OCI-LY7 (cell line): ENCODE measurements at regions of chr13 and their contacts with region 1.

Region 1: GRCh38 chr13:28636674-28637317 is 22.1 kb upstream of the POMP start:
- DNase-seq: peak; percentile 83
- H3K4me3 ChIP-seq: peak overlapping the region; percentile 27
- H3K27ac ChIP-seq: no peak overlapping the region
- H3K4me1 ChIP-seq: peaks cover 29% of the 10 kb centered on the region
- CTCF ChIP-seq: peak; percentile 93

Region 2: GRCh38 chr13:28000567-28000966 is 636.2 kb before region 1 on chr13:
- CTCF ChIA-PET with region 1: no interaction called
- POLR2A ChIA-PET with region 1: no interaction called
- intact Hi-C with region 1: loop called (anchors 10 kb)
- DNase-seq: no peak
- H3K4me3 ChIP-seq: no peak overlapping the region
- H3K27ac ChIP-seq: no peak overlapping the region
- H3K4me1 ChIP-seq: no peaks in the 10 kb centered on the region
- CTCF ChIP-seq: no peak

Region 3: DNA sequence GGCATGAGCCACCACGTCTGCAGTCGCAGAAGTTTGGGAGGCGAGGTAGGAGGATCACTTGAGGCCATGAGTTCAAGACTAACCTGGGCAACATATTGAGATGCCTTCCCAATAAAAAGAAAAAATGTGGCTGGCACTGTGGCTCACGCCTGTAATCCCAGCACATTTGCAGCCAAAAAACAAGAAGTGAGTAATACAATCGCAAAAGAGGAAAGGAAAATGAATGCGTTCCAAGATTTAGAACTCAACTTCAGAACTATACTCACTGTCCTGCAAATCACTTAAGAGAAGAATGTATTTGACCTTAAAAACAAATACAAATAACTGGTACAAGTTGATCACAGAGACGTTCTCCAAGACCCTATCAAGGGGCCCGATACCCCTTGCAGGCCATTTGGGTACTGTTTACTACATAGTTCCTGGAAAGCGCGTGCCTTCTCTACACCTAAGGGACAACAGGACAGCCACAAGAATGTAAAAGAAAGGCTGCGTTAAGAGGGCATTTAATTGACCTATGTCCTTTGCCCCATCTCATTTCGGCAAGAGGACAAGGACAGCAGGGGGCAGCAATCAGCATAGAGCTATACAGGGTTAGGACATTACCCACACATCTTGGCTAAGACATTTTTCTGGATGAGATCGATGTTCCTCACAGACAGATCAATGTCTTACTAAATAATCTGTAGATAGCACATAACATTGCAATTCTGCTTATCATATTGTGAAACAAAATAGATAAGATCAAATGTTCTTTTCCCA is 577.8 kb before region 1 on chr13:
- CTCF ChIA-PET with region 1: no interaction called
- POLR2A ChIA-PET with region 1: no interaction called
- intact Hi-C with region 1: loop called (anchors 5 kb)
- DNase-seq: peak; percentile 42
- H3K4me3 ChIP-seq: no peak overlapping the region
- H3K27ac ChIP-seq: no peak overlapping the region
- H3K4me1 ChIP-seq: no peaks in the 10 kb centered on the region
- CTCF ChIP-seq: peak; percentile 67

Region 4: GRCh38 chr13:28131664-28132063 is 505.1 kb before region 1 on chr13:
- CTCF ChIA-PET with region 1: no interaction called
- POLR2A ChIA-PET with region 1: no interaction called
- intact Hi-C with region 1: loop called (anchors 2 kb)
- DNase-seq: no peak
- H3K4me3 ChIP-seq: no peak overlapping the region
- H3K27ac ChIP-seq: no peak overlapping the region
- H3K4me1 ChIP-seq: peaks cover 2% of the 10 kb centered on the region
- CTCF ChIP-seq: no peak

Region 5: DNA sequence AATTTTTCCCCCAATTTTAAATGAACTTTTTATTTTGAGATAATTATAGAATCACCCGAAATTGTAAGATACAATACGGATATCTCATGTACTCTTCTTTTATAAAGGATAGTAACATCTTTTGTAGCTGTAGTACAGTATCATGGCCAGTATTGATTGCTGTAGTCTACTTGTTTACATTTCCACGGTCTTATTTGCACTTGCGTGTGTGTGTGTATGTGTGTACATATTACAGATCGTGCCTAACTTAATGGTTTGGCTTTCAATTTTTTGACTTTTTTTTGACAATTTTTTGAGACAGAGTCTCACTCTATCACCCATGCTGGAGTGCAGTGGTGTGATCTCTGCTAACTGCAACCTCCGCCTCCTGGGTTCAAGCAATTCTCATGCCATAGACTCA is 491.7 kb before region 1 on chr13:
- CTCF ChIA-PET with region 1: no interaction called
- POLR2A ChIA-PET with region 1: no interaction called
- intact Hi-C with region 1: no loop called
- DNase-seq: no peak
- H3K4me3 ChIP-seq: no peak overlapping the region
- H3K27ac ChIP-seq: no peak overlapping the region
- H3K4me1 ChIP-seq: peaks cover 5% of the 10 kb centered on the region
- CTCF ChIP-seq: no peak

Region 6: GRCh38 chr13:28273919-28274318 is 362.9 kb before region 1 on chr13:
- CTCF ChIA-PET with region 1: no interaction called
- POLR2A ChIA-PET with region 1: no interaction called
- intact Hi-C with region 1: loop called (anchors 5 kb)
- DNase-seq: peak; percentile 40
- H3K4me3 ChIP-seq: no peak overlapping the region
- H3K27ac ChIP-seq: no peak overlapping the region
- H3K4me1 ChIP-seq: peaks cover 33% of the 10 kb centered on the region
- CTCF ChIP-seq: peak; percentile 66

Region 7: GRCh38 chr13:28324181-28324789 is 312.5 kb before region 1 on chr13:
- CTCF ChIA-PET with region 1: no interaction called
- POLR2A ChIA-PET with region 1: interaction called, 5 read pairs
- intact Hi-C with region 1: loop called (anchors 1 kb)
- DNase-seq: peak; percentile 76
- H3K4me3 ChIP-seq: no peak overlapping the region
- H3K27ac ChIP-seq: no peak overlapping the region
- H3K4me1 ChIP-seq: no peaks in the 10 kb centered on the region
- CTCF ChIP-seq: peak; percentile 87

Region 8: DNA sequence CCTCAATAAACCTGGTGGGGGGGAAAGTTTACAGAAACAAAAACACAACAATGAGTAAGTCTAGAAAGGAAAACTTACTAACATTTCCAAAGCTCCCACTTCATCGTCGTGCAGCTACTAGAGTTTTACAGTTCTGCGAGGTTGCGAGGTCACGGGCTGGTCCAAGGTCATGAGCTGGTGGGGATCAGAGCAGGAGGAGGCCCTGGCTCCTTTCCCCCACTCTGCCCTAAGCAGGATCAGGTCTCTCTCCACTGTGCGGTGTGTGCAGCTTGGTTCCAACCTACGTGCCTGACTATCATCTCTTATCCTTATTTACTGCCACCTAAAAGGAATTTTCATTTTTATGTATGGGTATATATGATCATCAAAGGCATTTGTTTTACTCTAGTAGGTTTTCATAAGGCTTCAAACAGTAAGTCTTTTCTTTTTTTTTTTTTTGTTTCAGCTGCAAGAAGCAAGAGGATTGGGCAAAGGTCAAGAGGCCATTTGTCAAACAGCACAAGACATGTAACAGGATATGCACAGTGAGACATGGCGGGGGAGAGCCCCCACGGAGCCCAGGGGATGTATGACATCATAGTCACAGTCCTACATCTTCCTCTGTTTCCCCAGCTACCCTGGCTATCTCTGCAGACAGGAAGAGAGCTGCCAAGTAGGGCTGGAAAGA is 54.4 kb before region 1 on chr13:
- CTCF ChIA-PET with region 1: no interaction called
- POLR2A ChIA-PET with region 1: no interaction called
- intact Hi-C with region 1: no loop called
- DNase-seq: no peak
- H3K4me3 ChIP-seq: no peak overlapping the region
- H3K27ac ChIP-seq: no peak overlapping the region
- H3K4me1 ChIP-seq: no peaks in the 10 kb centered on the region
- CTCF ChIP-seq: no peak

Region 9: DNA sequence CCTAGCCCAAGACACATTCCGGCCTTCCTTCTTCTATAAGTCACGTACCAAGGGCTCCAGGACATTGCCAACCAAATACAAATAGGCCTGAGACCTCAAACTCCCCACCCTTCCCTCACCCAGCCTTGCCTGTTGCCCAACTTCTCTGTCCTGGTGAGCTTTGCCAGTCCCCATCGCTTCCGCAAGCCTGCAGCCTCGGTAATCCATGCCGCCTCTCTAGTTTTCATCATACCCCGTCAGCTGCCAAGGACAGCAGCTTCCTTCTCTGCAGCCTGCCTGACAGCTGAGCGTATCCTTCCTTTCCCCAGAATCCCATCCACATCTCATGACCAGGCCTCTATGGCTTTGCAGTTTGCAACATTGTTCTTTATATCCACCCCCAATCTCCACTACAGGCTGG is 14.5 kb before region 1 on chr13:
- CTCF ChIA-PET with region 1: no interaction called
- POLR2A ChIA-PET with region 1: no interaction called
- intact Hi-C with region 1: no loop called
- DNase-seq: no peak
- H3K4me3 ChIP-seq: no peak overlapping the region
- H3K27ac ChIP-seq: no peak overlapping the region
- H3K4me1 ChIP-seq: no peaks in the 10 kb centered on the region
- CTCF ChIP-seq: no peak

Region 10: DNA sequence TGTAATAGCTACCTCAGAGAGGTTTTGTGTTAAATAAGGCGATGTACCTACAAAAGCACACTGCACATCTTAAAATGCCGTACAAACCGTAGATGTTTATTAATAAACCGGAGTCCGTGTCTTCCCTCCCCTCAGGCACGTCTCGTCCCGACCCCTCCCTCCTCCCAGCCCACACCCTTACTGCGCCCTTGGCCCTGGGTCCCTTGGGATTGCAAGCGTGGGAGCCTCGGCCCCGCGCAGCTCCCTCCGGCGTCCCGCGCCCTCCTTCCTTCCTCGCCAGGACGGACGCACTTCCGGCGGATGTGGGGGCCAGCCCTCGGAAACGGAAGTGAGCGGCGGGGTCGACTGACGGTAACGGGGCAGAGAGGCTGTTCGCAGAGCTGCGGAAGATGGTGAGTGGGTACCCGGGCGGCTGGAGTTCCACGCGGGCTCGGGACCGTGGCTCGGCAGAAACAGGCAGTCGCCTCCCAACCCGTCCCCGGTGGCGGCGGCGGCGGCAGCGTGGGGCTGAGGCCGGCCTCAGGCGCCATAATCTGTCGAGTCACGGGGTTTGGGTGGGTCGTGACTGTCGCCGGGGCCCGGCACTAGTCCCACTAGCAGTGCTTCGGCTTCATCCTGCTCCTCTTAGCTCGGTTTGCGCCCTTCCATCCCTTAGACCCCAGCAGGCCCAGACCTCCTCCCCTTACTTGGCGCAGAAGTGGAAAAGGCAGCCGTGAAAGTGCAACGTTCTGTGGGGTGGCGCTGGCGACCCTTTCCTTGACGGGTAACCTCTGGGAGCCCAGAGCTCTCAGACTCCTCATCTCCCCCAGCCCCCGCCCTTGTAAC is 22.2 kb after region 1 on chr13 and contains the start of gene POMP:
- CTCF ChIA-PET with region 1: no interaction called
- POLR2A ChIA-PET with region 1: interaction called, 52 read pairs
- intact Hi-C with region 1: no loop called
- DNase-seq: peak; percentile 93
- H3K4me3 ChIP-seq: peak within 1 kb of the TSS; percentile 83
- H3K27ac ChIP-seq: peak within 1 kb of the TSS; percentile 68
- H3K4me1 ChIP-seq: peaks cover 22% of the 10 kb centered on the region
- CTCF ChIP-seq: peak; percentile 43; the same call in 1 of the 2 replicates
- total RNA-seq, gene POMP: 46.6 and 46.7 TPM in 2 replicates

Region 11: DNA sequence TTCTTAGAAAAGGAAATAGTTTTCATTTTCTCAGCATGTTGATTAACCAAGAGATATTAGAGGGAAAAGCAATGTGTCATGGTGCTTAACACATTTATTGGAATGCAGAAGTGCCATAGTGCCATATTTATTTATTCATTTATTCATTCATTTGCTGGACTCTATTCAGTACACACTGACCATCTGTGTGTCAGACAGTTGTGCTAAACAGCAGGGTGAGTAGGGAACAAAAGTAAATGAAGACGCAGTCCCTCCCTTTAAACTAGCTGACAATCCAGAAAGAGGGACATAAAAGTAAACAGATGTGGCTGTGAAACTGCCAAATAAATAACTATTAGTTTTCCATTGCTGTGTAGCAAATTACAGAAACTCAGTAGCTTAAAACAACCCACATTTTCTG is 507.1 kb after region 1 on chr13:
- CTCF ChIA-PET with region 1: no interaction called
- POLR2A ChIA-PET with region 1: no interaction called
- intact Hi-C with region 1: no loop called
- DNase-seq: no peak
- H3K4me3 ChIP-seq: no peak overlapping the region
- H3K27ac ChIP-seq: no peak overlapping the region
- H3K4me1 ChIP-seq: no peaks in the 10 kb centered on the region
- CTCF ChIP-seq: no peak